ENCODE measurements at regions of chr1 and their contacts with region 1.

Region 1: DNA sequence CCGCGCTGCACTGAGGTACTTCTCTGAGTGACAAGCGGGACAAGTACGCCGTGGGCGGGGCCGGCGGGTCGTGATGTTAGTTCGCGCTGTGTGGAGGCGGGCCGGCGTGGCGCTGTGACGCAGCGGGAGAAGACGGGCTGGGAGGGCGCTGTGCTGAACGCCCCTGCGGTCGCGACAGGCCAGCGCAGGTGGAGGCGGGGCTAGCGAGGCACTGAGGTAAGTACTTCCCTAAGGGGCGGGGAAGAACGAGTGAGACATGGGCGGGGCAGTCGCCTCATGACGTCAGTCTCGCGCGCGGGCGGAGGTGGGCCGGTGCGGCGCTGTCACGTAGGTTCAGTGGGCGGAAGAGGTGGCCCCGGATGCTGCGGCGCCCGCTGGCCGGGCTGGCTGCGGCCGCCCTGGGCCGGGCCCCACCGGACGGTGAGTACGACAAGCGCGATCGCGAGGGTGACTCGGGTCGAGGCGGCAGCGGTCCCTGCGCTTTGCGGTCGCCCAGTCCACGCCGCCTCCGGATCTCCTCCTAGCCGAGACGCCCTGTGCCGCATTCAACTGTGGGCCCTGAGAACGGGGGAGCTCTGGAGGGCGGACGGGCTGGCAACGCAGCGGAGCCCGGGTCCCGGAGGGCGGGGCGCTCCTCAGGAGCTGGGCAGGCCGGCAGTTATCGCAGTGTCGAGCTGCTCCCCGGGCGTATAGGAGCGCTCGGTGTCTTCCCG is at the start of gene GUK1:
- DNase-seq: peak; percentile 99 to 100 (median 100)
- ATAC-seq: peak; percentile 88
- H3K4me3 ChIP-seq: peak within 1 kb of the TSS; percentile 78
- H3K4me3 Mint-ChIP-seq: peak within 1 kb of the TSS; percentile 90
- H3K27ac ChIP-seq: peak within 1 kb of the TSS; percentile 92 to 97
- H3K27ac Mint-ChIP-seq: peak within 1 kb of the TSS; percentile 94
- H3K4me1 ChIP-seq: peaks cover 51% of the 10 kb centered on the region
- H3K4me1 Mint-ChIP-seq: peaks cover 44% of the 10 kb centered on the region
- H3K27me3 ChIP-seq: no peaks in the 10 kb centered on the region
- H3K27me3 Mint-ChIP-seq: no peaks in the 10 kb centered on the region
- CTCF ChIP-seq: no peak
- total RNA-seq, gene GUK1: 373 to 378 TPM

Region 2: GRCh38 chr1:228156901-228157728 is 17.0 kb after region 1 on chr1:
- CTCF ChIA-PET with region 1: no interaction called
- POLR2A ChIA-PET with region 1: interaction called, 10 read pairs
- intact Hi-C with region 1: no loop called
- DNase-seq: peak in 3 of 14 experiments; percentile 3 to 38 (median 36)
- ATAC-seq: peak; percentile 47
- H3K4me3 ChIP-seq: no peak overlapping the region
- H3K4me3 Mint-ChIP-seq: no peak overlapping the region
- H3K27ac ChIP-seq: no peak overlapping the region
- H3K27ac Mint-ChIP-seq: peak overlapping the region; percentile 39
- H3K4me1 ChIP-seq: peaks cover 25% of the 10 kb centered on the region
- H3K4me1 Mint-ChIP-seq: peaks cover 19% of the 10 kb centered on the region
- H3K27me3 ChIP-seq: no peaks in the 10 kb centered on the region
- H3K27me3 Mint-ChIP-seq: no peaks in the 10 kb centered on the region
- CTCF ChIP-seq: no peak

Region 3: GRCh38 chr1:228212966-228213844 is 73.1 kb after region 1 on chr1:
- CTCF ChIA-PET with region 1: interaction called, 3 read pairs
- POLR2A ChIA-PET with region 1: no interaction called
- intact Hi-C with region 1: loop called in 1 of 2 experiments (anchors 2 kb)
- DNase-seq: peak; percentile 83 to 96 (median 90)
- ATAC-seq: peak; percentile 89
- H3K4me3 ChIP-seq: peak overlapping the region; percentile 64
- H3K4me3 Mint-ChIP-seq: peak overlapping the region; percentile 92
- H3K27ac ChIP-seq: peak overlapping the region in 1 of 2 donors; percentile 21
- H3K27ac Mint-ChIP-seq: peak overlapping the region; percentile 86
- H3K4me1 ChIP-seq: peaks cover 22% of the 10 kb centered on the region
- H3K4me1 Mint-ChIP-seq: peaks cover 12% of the 10 kb centered on the region
- H3K27me3 ChIP-seq: no peaks in the 10 kb centered on the region
- H3K27me3 Mint-ChIP-seq: no peaks in the 10 kb centered on the region
- CTCF ChIP-seq: peak; percentile 59

Region 4: DNA sequence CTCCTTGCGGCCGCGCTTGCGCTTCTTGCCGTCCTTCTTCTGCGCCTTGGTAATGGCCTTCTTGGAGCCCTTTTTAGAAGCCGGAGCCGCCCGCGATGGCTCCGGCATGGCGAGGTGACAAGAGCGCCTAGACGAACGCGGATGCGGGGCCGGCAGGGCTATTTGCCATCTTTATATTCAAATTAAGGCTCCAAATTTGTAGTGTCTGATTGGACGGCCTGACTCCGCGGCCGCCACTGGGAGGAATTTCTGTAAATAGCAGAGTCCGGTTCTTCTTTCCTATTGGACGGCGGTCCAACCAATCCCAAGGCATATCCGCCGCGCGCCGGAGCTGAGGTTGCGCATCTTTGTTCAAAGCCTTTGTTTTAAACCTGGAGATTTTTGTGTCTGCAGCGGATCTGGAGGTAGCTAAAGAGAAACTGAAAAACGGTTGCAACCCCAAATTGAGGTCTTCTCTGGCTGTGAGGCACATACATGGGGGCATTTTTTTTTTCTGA is 324.4 kb after region 1 on chr1:
- CTCF ChIA-PET with region 1: no interaction called
- POLR2A ChIA-PET with region 1: no interaction called
- intact Hi-C with region 1: loop called in 1 of 2 experiments (anchors 10 kb)
- DNase-seq: peak; percentile 77 to 96 (median 84)
- ATAC-seq: peak; percentile 97
- H3K4me3 ChIP-seq: peak overlapping the region; percentile 52
- H3K4me3 Mint-ChIP-seq: peak overlapping the region; percentile 88
- H3K27ac ChIP-seq: no peak overlapping the region
- H3K27ac Mint-ChIP-seq: peak overlapping the region; percentile 77
- H3K4me1 ChIP-seq: peaks cover 35% of the 10 kb centered on the region
- H3K4me1 Mint-ChIP-seq: peaks cover 41% of the 10 kb centered on the region
- H3K27me3 ChIP-seq: peaks cover 2 to 12% of the 10 kb centered on the region in 2 experiments
- H3K27me3 Mint-ChIP-seq: peaks cover 17% of the 10 kb centered on the region
- CTCF ChIP-seq: no peak

Region 5: GRCh38 chr1:229507951-229508822 is 1368.1 kb after region 1 on chr1 and contains the start of gene NUP133:
- CTCF ChIA-PET with region 1: no interaction called
- POLR2A ChIA-PET with region 1: no interaction called
- intact Hi-C with region 1: loop called in 1 of 2 experiments (anchors 10 kb)
- DNase-seq: peak; percentile 96 to 100 (median 98)
- ATAC-seq: peak; percentile 97
- H3K4me3 ChIP-seq: peak within 1 kb of the TSS; percentile 98
- H3K4me3 Mint-ChIP-seq: peak within 1 kb of the TSS; percentile 97
- H3K27ac ChIP-seq: peak within 1 kb of the TSS; percentile 90 to 93
- H3K27ac Mint-ChIP-seq: peak within 1 kb of the TSS; percentile 97
- H3K4me1 ChIP-seq: peaks cover 19% of the 10 kb centered on the region
- H3K4me1 Mint-ChIP-seq: peaks cover 33% of the 10 kb centered on the region
- H3K27me3 ChIP-seq: no peaks in the 10 kb centered on the region
- H3K27me3 Mint-ChIP-seq: no peaks in the 10 kb centered on the region
- CTCF ChIP-seq: no peak
- total RNA-seq, gene NUP133: 42.0 to 45.3 TPM